CD4-positive, alpha-beta T cell (primary cell): ENCODE measurements at regions of chr6 and their contacts with region 1.

Region 1: GRCh38 chr6:25017932-25018567 is 82.3 kb upstream of the RIPOR2 start:
- DNase-seq: peak; percentile 68 to 92 (median 79)
- ATAC-seq: peak; percentile 75
- H3K4me3 ChIP-seq: no peak overlapping the region
- H3K4me3 Mint-ChIP-seq: peak overlapping the region; percentile 46
- H3K27ac ChIP-seq: peak overlapping the region; percentile 44 to 50
- H3K27ac Mint-ChIP-seq: peak overlapping the region; percentile 89
- H3K4me1 ChIP-seq: peaks cover 35% of the 10 kb centered on the region
- H3K4me1 Mint-ChIP-seq: peaks cover 44% of the 10 kb centered on the region
- H3K27me3 ChIP-seq: no peaks in the 10 kb centered on the region
- H3K27me3 Mint-ChIP-seq: no peaks in the 10 kb centered on the region
- CTCF ChIP-seq: peak; percentile 87

Region 2: DNA sequence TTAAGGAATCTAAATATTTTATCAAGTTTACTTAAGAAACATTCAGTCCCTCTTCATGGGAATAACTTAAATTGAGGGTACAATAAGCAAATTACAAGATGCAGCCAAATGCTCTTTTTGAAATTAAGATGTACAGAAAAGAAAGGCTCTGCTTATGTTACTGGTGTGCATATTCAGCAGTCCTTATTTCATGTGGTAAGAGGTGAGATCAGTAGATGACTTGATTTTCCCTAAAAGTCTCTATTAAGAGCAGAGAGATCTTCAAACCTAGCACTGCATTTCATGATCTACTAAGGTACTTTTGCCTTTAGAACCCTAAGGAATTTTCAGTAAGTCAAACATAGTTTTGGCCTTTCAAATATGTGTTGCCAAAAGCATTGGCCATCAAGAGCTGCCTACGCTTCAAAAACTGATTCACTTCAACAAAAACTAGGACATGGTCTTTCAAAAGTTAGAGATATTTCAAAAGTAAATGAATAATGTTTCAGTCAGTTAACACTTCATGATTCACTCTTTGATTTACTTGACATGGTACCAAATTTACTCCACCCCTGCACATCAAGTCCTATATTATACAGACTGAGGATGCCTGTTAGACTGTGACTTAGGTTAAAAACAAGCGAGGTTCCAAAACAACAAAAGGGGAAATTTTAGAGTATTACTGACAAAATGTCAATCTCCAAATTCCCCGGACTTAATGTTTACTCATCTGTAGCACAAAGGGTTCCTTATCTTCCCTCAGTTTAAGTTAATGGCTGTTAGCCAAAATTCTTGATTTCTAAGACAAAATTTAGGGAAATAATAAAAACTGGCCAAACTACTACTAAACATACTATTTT is 318.3 kb before region 1 on chr6:
- CTCF ChIA-PET with region 1: no interaction called
- POLR2A ChIA-PET with region 1: no interaction called
- intact Hi-C with region 1: loop called in 1 of 2 experiments (anchors 5 kb)
- DNase-seq: no peak
- ATAC-seq: no peak
- H3K4me3 ChIP-seq: no peak overlapping the region
- H3K4me3 Mint-ChIP-seq: no peak overlapping the region
- H3K27ac ChIP-seq: no peak overlapping the region
- H3K27ac Mint-ChIP-seq: peak overlapping the region; percentile 69
- H3K4me1 ChIP-seq: no peaks in the 10 kb centered on the region
- H3K4me1 Mint-ChIP-seq: peaks cover 25% of the 10 kb centered on the region
- H3K27me3 ChIP-seq: no peaks in the 10 kb centered on the region
- H3K27me3 Mint-ChIP-seq: no peaks in the 10 kb centered on the region
- CTCF ChIP-seq: no peak

Region 3: GRCh38 chr6:24829657-24830056 is 188.4 kb before region 1 on chr6:
- CTCF ChIA-PET with region 1: interaction called, 3 read pairs
- POLR2A ChIA-PET with region 1: interaction called, 13 read pairs
- intact Hi-C with region 1: no loop called
- DNase-seq: no peak
- ATAC-seq: no peak
- H3K4me3 ChIP-seq: no peak overlapping the region
- H3K4me3 Mint-ChIP-seq: no peak overlapping the region
- H3K27ac ChIP-seq: no peak overlapping the region
- H3K27ac Mint-ChIP-seq: peak overlapping the region; percentile 71
- H3K4me1 ChIP-seq: peaks cover 15% of the 10 kb centered on the region
- H3K4me1 Mint-ChIP-seq: peaks cover 35% of the 10 kb centered on the region
- H3K27me3 ChIP-seq: no peaks in the 10 kb centered on the region
- H3K27me3 Mint-ChIP-seq: no peaks in the 10 kb centered on the region
- CTCF ChIP-seq: no peak

Region 4: DNA sequence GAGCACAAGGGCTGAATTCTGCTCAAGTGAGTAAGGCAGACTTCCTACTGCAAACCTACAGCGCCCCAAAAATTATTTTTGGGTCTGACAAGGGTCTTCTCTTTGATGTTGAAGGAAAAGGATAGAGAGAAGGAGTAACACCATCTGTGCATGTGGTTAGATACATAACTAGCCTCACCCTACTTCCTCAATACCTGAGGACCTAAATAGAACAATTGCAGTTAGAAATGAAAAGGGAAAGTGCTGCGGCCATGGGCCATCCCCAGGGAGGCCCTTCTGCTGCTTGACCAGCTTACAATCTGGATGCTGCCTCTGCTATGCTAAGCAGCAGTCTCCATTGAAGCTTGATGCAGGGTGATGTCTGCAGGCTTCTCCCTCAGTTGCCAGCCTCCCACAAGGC is 156.1 kb before region 1 on chr6:
- CTCF ChIA-PET with region 1: interaction called, 95 read pairs
- POLR2A ChIA-PET with region 1: interaction called, 53 read pairs
- intact Hi-C with region 1: no loop called
- DNase-seq: no peak
- ATAC-seq: no peak
- H3K4me3 ChIP-seq: no peak overlapping the region
- H3K4me3 Mint-ChIP-seq: no peak overlapping the region
- H3K27ac ChIP-seq: peak overlapping the region; percentile 39 to 78
- H3K27ac Mint-ChIP-seq: peak overlapping the region; percentile 93
- H3K4me1 ChIP-seq: peaks cover 77% of the 10 kb centered on the region
- H3K4me1 Mint-ChIP-seq: peaks cover 98% of the 10 kb centered on the region
- H3K27me3 ChIP-seq: no peaks in the 10 kb centered on the region
- H3K27me3 Mint-ChIP-seq: no peaks in the 10 kb centered on the region
- CTCF ChIP-seq: no peak

Region 5: DNA sequence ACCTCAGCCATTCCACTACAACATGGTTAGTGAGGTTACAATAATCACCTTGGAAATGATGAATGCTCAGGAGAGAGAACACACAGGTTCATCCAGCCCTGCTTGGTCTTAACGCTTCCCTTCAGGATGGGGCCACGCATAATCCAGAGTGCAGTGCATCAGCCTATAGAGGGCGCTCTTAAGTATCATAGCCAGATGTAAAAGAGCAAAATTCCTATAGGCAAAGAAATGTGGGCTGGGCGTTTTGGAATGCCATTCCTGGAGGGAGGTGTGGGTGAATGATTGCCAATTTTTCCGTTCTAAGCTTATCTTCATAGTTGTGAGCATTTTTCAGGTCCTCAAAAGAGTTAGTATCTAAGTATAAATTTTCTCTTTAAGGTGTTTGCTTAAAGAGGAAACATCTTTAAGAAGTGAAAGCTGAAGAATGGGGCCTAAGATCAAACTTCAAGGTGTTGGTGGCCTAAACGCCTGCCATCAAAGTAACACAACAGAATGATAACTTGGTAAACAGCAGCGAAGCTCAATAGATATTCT is 84.1 kb before region 1 on chr6:
- CTCF ChIA-PET with region 1: interaction called, 37 read pairs
- POLR2A ChIA-PET with region 1: interaction called, 18 read pairs
- intact Hi-C with region 1: loop called in 1 of 2 experiments (anchors 1 kb)
- DNase-seq: peak in 10 of 14 experiments; percentile 30 to 82 (median 50)
- ATAC-seq: peak; percentile 21
- H3K4me3 ChIP-seq: peak overlapping the region; percentile 89
- H3K4me3 Mint-ChIP-seq: peak overlapping the region; percentile 97
- H3K27ac ChIP-seq: peak overlapping the region; percentile 71 to 89
- H3K27ac Mint-ChIP-seq: peak overlapping the region; percentile 97
- H3K4me1 ChIP-seq: peaks cover 38% of the 10 kb centered on the region
- H3K4me1 Mint-ChIP-seq: peaks cover 62% of the 10 kb centered on the region
- H3K27me3 ChIP-seq: no peaks in the 10 kb centered on the region
- H3K27me3 Mint-ChIP-seq: no peaks in the 10 kb centered on the region
- CTCF ChIP-seq: peak; percentile 97

Region 6: DNA sequence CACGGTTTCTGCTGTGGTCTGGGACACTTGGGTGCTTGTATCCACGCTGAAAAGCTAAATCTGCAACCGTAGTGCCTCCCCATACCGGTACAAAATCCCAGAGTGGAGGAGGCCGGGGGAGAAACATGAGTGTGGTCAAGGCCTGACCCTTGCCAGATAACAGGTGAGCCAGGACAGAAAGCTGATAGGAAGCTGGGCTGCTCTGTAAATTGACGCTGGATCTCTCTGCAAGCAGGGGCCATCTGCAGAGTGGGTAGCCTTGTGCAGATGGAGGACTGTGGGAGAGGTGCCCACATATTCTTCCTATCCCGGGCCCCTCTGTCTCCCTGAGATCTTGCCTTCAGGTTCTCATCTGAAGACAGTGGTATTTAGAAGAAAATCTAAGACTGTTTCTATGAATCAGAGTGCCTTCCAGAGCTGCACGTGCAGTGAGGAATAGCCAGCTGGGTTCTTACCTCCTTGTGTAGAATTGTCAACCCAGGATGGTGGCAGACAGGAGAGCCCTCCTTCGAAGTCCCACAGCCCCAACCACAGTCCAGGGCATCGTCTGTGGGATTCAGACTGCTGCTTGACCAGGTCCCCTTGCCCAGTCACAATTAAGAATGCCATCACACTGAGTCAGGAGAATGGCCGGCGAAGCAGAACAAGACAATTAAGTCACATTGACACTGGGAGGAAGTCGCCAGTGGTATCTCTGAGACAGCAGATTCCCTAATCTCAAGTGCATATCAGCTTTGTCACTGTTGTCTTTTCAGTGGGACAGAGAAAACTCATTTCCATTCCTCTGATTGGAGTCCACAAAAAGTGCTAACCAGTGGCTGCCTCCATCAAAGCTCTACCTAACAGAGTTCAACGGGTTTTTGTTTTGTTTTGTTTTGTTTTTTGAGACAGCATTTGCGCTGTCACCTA is 17.7 kb after region 1 on chr6:
- CTCF ChIA-PET with region 1: interaction called, 10 read pairs
- POLR2A ChIA-PET with region 1: interaction called, 3 read pairs
- intact Hi-C with region 1: no loop called
- DNase-seq: peak in 4 of 14 experiments; percentile 27 to 64 (median 58)
- ATAC-seq: peak; percentile 47
- H3K4me3 ChIP-seq: peak overlapping the region; percentile 50
- H3K4me3 Mint-ChIP-seq: peak overlapping the region; percentile 83
- H3K27ac ChIP-seq: peak overlapping the region; percentile 48 to 75
- H3K27ac Mint-ChIP-seq: peak overlapping the region; percentile 96
- H3K4me1 ChIP-seq: peaks cover 50% of the 10 kb centered on the region
- H3K4me1 Mint-ChIP-seq: peaks cover 66% of the 10 kb centered on the region
- H3K27me3 ChIP-seq: no peaks in the 10 kb centered on the region
- H3K27me3 Mint-ChIP-seq: no peaks in the 10 kb centered on the region
- CTCF ChIP-seq: no peak